Caki2 (cell line): ENCODE measurements at regions of chr9 and their contacts with region 1.

Region 1: DNA sequence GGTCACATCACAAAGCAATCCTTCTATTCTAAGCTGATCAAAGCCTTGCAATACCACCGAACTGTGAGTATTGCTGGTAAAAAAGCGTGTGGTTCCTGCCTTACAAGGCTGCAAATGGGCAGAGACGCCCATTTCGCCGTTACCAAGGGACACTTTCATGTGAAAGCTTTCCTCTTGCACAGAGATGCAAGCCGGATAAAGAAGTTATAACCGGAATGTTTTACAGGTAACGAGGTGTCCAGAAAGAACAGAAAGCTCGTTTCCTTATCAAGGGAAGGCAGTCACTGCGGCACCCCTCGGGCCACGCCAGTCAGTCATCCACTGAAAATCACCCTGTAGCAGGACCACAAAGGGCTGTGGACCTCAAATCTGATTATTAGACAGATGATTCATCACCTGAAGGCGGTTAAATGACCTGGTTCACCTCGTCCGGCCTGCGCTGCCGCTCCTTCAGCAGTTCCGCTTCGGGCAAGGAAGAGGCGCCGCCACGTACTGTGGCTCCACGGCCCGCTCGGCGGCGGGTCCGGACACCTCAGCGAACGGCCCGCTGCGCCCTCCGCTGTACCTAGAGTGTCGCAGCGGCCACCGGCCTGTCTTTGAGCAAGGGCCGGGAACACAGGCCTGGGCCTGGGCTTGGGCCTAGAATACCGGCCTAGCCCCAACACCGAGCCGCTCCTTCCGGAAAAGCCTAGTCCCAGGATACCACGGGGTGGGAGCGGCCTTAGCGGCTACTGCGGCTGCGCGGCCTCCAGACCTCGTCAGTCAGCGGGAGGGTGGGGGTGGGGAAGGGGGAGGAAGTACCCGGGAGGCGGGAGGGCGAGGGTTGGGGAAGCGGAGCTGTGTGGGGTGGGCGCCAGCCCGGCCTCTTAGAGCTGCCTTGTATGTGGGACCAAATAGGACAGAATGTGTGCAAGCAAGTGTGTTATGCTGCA is at the start of gene KLHL9:
- DNase-seq: peak; percentile 77
- total RNA-seq, gene KLHL9: 2.5 and 4.3 TPM in 2 replicates

Region 2: DNA sequence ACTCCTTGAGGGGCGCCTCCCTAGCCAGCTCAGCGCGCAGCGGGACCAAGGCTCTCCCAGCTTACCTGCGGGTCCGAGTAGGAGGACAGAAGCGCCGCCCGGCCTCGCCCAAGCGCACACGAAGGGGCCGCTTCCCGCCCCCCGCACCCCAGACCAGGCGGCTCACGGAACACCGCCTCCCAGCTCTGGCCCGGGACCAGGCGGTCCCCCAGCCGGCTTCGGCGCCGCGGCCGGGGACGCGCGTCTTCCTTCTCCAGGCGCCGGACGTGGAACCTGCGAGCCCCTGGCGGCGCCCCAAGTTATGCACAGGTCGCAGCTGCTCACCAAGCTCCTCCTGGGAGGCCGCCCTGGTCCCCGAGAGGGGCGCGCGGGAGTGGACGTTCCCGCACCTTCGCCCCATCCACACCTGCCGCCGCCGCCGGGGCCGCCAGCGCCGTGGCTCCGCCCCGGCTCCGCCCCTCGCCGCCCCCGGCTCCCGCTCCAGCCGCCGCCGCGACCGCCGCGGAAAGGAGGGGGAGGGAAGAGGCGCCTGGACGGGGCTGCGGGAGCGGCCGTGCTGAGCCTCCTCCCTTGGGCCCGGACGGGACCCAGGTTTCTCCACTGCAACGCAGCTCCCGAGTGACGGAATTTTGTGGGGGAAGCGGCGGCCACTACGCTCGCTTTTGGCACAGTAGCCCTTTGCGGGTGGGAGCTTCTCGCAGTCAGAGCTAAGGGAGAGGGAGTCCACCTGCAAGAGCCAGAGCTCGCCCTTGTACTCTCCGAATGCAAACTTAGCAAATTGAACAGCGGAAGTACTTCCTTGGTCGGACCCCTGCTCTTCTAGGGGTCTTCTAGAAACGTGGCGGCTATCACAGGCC is 224.7 kb after region 1 on chr9:
- in situ Hi-C with region 1: loop called (anchors 25 kb)
- DNase-seq: peak; percentile 79

Region 3: GRCh38 chr9:21789541-21790037 is 454.6 kb after region 1 on chr9:
- in situ Hi-C with region 1: loop called (anchors 10 kb)
- DNase-seq: peak; percentile 82